ENCODE measurements at regions of chr6 and their contacts with region 1.

Region 1: DNA sequence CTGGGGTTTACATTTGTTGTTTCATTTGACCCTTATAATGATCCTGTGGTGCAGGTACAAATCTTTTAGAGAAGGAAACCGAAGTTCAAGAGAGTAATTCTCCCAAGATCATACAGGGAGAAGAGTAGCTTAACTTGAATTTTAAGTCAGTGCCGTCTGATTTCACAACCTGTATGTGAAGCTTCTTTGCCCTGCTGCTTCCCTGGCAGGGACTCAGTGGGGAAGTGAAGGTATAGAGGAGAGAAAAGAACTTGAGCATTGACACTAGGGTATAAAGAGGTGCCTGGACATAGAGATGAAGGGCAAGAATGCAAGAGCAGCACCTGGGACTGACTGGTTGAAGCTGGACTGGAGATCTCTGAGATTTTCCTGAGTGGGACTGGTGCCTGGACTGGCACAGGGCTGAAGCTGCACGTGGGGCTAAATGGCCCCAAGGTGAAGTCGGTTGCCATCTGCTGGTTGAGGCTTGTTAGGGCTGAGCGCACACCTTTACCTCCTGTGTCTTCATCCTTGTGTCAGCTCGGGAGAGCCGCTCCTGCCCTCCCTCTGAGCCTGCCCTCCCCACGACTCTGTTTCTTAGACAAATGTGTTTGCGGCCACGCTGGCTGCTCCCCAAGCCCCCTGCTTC is 41.8 kb downstream of the FARS2 start:
- DNase-seq: peak; percentile 41
- ATAC-seq: peak; percentile 93
- H3K4me3 ChIP-seq: peak overlapping the region; percentile 55
- H3K27ac ChIP-seq: peak overlapping the region; percentile 68
- H3K4me1 ChIP-seq: peaks cover 18% of the 10 kb centered on the region
- H3K27me3 ChIP-seq: no peaks in the 10 kb centered on the region
- CTCF ChIP-seq: peak; percentile 87 to 93 (median 90)
- EP300 ChIP-seq: no peak
- POLR2A ChIP-seq: no peak
- RAD21 ChIP-seq: peak; percentile 78

Region 2: DNA sequence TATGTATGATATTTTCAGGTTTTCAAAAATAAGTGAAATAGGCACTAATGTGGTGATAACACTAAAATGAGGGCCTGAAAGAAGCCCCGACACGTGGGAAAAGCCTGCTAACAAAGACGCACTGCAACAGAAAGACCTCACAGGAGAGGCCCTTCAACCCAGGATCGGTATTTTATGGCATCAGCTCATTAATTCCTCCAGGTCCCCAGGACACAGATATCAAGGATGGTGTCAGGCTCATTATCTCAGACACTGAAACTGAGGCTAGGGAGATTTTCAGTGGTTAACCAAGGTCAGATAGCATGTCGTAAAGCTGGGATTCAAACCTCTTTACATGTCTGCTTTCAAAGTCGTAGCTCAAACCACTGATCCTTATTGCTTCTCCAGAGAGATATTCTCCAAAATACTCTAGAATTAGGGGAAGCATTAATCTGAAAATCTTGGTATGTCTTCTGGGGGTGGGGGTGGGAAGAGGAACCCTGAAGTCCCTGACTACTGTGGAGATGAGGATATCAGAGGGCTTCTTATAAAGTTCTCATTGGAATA is 153.9 kb before region 1 on chr6:
- CTCF ChIA-PET with region 1: interaction called, 198 read pairs
- POLR2A ChIA-PET with region 1: no interaction called
- RAD21 ChIA-PET with region 1: interaction called, 77 read pairs
- SMC1A ChIA-PET with region 1: interaction called, 61 read pairs
- in situ Hi-C with region 1: loop called (anchors 5 kb)
- intact Hi-C with region 1: no loop called
- DNase-seq: no peak
- ATAC-seq: no peak; the same call in 2 of the 3 replicates
- H3K4me3 ChIP-seq: no peak overlapping the region
- H3K27ac ChIP-seq: no peak overlapping the region
- H3K4me1 ChIP-seq: no peaks in the 10 kb centered on the region
- H3K27me3 ChIP-seq: no peaks in the 10 kb centered on the region
- CTCF ChIP-seq: no peak
- EP300 ChIP-seq: no peak
- POLR2A ChIP-seq: no peak
- RAD21 ChIP-seq: no peak

Region 3: DNA sequence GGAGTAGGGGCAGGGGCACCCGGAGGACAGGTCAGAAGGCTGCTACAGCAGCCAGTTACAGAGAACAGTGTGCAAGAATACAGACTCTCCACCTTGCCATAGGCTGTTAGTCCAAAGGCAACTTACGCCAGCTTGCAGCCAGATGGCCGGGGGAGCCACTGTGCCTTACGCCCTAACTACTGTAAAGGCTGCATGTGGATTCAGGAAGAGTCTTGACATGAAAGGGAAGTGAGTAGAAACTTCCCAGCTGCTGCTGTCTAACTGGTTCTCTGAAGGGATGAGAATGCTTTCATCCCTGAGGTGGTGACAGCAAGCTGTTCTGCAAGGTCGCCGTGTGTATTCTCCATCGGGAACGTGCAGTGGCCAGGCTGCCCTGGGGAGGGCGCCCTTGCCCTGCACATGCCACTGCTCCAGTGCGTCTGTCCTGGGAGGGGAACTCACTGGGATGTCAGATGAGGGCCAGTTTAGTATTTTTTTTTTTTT is 88.5 kb before region 1 on chr6:
- CTCF ChIA-PET with region 1: interaction called, 29 read pairs
- POLR2A ChIA-PET with region 1: no interaction called
- RAD21 ChIA-PET with region 1: interaction called, 17 read pairs
- SMC1A ChIA-PET with region 1: interaction called, 32 read pairs
- in situ Hi-C with region 1: no loop called
- intact Hi-C with region 1: loop called (anchors 1 kb)
- DNase-seq: no peak
- ATAC-seq: peak; percentile 87
- H3K4me3 ChIP-seq: no peak overlapping the region
- H3K27ac ChIP-seq: no peak overlapping the region
- H3K4me1 ChIP-seq: no peaks in the 10 kb centered on the region
- H3K27me3 ChIP-seq: no peaks in the 10 kb centered on the region
- CTCF ChIP-seq: peak; percentile 58 to 73 (median 70)
- EP300 ChIP-seq: no peak
- POLR2A ChIP-seq: no peak
- RAD21 ChIP-seq: peak; percentile 89

Region 4: GRCh38 chr6:5266423-5266822 is 36.7 kb before region 1 on chr6:
- CTCF ChIA-PET with region 1: interaction called, 32 read pairs
- POLR2A ChIA-PET with region 1: interaction called, 3 read pairs
- RAD21 ChIA-PET with region 1: interaction called, 19 read pairs
- SMC1A ChIA-PET with region 1: interaction called, 18 read pairs
- in situ Hi-C with region 1: no loop called
- intact Hi-C with region 1: no loop called
- DNase-seq: no peak
- ATAC-seq: no peak
- H3K4me3 ChIP-seq: no peak overlapping the region
- H3K27ac ChIP-seq: 0 out of 2 replicates have a peak overlapping the region, but pooled peaks have one; percentile 11
- H3K4me1 ChIP-seq: no peaks in the 10 kb centered on the region
- H3K27me3 ChIP-seq: no peaks in the 10 kb centered on the region
- CTCF ChIP-seq: no peak
- EP300 ChIP-seq: no peak
- POLR2A ChIP-seq: no peak
- RAD21 ChIP-seq: no peak

Region 5: GRCh38 chr6:5287205-5287965 is 15.7 kb before region 1 on chr6:
- CTCF ChIA-PET with region 1: interaction called, 21 read pairs
- POLR2A ChIA-PET with region 1: interaction called, 4 read pairs
- RAD21 ChIA-PET with region 1: interaction called, 6 read pairs
- SMC1A ChIA-PET with region 1: interaction called, 24 read pairs
- in situ Hi-C with region 1: no loop called
- intact Hi-C with region 1: no loop called
- DNase-seq: no peak
- ATAC-seq: no peak
- H3K4me3 ChIP-seq: no peak overlapping the region
- H3K27ac ChIP-seq: no peak overlapping the region; the same call in 1 of the 2 replicates
- H3K4me1 ChIP-seq: peaks cover 14% of the 10 kb centered on the region
- H3K27me3 ChIP-seq: no peaks in the 10 kb centered on the region
- CTCF ChIP-seq: no peak
- EP300 ChIP-seq: no peak
- POLR2A ChIP-seq: no peak
- RAD21 ChIP-seq: no peak

Region 6: GRCh38 chr6:5379647-5380242 is 76.6 kb after region 1 on chr6:
- CTCF ChIA-PET with region 1: interaction called, 27 read pairs
- POLR2A ChIA-PET with region 1: no interaction called
- RAD21 ChIA-PET with region 1: interaction called, 3 read pairs
- SMC1A ChIA-PET with region 1: interaction called, 30 read pairs
- in situ Hi-C with region 1: no loop called
- intact Hi-C with region 1: loop called (anchors 1 kb)
- DNase-seq: peak; percentile 25
- ATAC-seq: peak; percentile 88
- H3K4me3 ChIP-seq: no peak overlapping the region
- H3K27ac ChIP-seq: no peak overlapping the region
- H3K4me1 ChIP-seq: no peaks in the 10 kb centered on the region
- H3K27me3 ChIP-seq: no peaks in the 10 kb centered on the region
- CTCF ChIP-seq: peak; percentile 76 to 87 (median 78)
- EP300 ChIP-seq: no peak
- POLR2A ChIP-seq: no peak
- RAD21 ChIP-seq: peak; percentile 82